ENCODE measurements at regions of chr12 and their contacts with region 1.

Region 1: DNA sequence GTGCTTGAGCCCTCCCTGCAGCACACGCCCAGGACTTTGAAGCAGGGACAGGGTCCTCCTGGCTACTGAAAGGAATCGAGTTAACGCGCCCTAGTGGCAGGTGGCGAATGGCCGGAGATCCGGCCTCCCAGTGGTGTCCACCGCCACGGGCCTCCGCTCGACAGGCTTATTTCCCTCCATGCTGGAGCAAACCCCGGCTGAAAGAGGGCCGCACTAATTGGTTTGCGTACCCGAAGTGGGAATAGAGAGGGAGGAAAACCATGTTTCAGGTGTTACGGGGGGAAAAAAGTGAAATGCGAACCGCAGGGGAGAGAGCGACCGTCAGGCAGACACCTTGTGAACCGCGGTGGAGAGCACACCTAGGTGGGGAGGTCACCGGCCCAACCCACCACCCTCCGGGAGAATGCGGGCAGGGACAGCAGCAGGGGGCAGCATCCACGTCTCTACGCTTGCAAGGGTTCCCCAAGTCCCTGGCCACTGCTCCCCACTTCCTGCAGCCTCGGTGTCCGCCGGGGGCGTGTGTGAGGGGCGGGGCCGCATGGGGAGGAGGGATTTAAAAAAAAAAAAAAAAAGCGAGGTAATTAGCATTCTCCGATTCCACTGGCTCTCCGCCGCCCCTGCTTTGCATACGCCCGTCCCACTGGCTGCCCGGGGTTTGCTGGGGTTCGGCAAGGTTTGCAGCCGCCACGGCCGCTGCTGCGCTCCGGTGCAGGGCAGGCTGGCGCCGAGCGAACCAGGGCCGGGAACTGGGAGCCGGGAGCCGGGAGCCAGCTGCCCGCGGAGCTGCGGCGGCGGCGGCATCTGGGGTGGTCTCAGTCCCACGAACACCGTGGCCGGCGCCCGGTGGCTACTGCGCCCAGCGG is 224.6 kb upstream of the CRY1 start:
- DNase-seq: peak; percentile 78
- ATAC-seq: peak; percentile 79
- H3K4me3 ChIP-seq: peak overlapping the region; percentile 65 to 66
- H3K27ac ChIP-seq: peak overlapping the region; percentile 45; the same call in 1 of the 2 replicates
- H3K4me1 ChIP-seq: peaks cover 10 to 36% of the 10 kb centered on the region in 2 experiments; a peak in 3 of 4 replicates
- H3K27me3 ChIP-seq: peaks cover 11% of the 10 kb centered on the region; the same call in 1 of the 2 replicates
- CTCF ChIP-seq: peak; percentile 37 to 64 (median 58); a peak in 4 of 6 replicates
- POLR2A ChIP-seq: no peak
- RAD21 ChIP-seq: peak; percentile 57

Region 2: DNA sequence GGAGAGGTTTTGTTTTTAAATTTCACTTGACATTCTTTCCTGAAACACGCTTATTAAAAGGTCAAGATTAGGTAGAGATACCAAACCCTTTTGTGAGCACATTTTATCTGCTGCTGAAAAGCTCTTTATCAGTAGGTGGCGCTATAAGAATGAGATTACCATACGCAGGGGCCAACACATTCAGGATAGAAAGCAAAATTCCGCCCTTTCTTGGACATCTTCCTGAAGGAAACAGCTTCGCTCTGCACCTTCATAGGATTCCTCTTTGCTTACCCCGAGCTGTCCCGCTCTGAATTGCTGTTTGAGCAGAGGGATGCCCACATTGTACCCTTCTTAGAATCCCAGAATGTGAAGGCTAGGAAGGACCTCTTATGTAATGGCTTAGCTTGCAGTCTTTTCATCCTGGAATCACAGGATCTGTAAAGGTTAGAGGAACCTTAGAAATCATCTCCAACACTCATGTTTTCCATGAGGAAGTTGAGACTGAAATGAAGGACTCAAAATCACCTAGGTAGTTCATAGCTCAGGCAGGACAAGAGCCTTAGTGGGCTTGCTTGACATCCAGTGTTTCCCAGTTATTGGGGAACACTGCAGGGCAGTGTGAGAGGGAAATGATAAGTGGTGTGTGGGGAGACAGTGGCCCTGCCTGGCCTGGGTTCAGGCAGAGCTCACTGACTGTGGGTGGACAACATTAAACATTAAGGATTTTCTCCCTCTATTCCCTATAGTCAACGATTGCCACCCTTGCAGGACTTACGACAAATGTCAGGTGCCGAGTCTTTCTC is 186.0 kb before region 1 on chr12:
- CTCF ChIA-PET with region 1: interaction called, 5 read pairs
- POLR2A ChIA-PET with region 1: no interaction called
- RAD21 ChIA-PET with region 1: no interaction called
- intact Hi-C with region 1: loop called (anchors 1 kb)
- DNase-seq: peak; percentile 44
- ATAC-seq: peak; percentile 78
- H3K4me3 ChIP-seq: no peak overlapping the region
- H3K27ac ChIP-seq: no peak overlapping the region
- H3K4me1 ChIP-seq: peaks cover 0 to 9% of the 10 kb centered on the region in 2 experiments; a peak in 2 of 4 replicates
- H3K27me3 ChIP-seq: no peaks in the 10 kb centered on the region
- CTCF ChIP-seq: peak; percentile 82 to 96 (median 92)
- POLR2A ChIP-seq: no peak
- RAD21 ChIP-seq: peak; percentile 97

Region 3: GRCh38 chr12:107402041-107403022 is 84.3 kb after region 1 on chr12:
- CTCF ChIA-PET with region 1: interaction called, 4 read pairs
- POLR2A ChIA-PET with region 1: no interaction called
- RAD21 ChIA-PET with region 1: no interaction called
- intact Hi-C with region 1: loop called (anchors 2 kb)
- DNase-seq: peak; percentile 69
- ATAC-seq: peak; percentile 76
- H3K4me3 ChIP-seq: no peak overlapping the region
- H3K27ac ChIP-seq: no peak overlapping the region
- H3K4me1 ChIP-seq: peaks cover under 1 to 15% of the 10 kb centered on the region in 2 experiments; a peak in 3 of 4 replicates
- H3K27me3 ChIP-seq: no peaks in the 10 kb centered on the region
- CTCF ChIP-seq: peak; percentile 82 to 89 (median 83)
- POLR2A ChIP-seq: no peak
- RAD21 ChIP-seq: peak; percentile 94

Region 4: DNA sequence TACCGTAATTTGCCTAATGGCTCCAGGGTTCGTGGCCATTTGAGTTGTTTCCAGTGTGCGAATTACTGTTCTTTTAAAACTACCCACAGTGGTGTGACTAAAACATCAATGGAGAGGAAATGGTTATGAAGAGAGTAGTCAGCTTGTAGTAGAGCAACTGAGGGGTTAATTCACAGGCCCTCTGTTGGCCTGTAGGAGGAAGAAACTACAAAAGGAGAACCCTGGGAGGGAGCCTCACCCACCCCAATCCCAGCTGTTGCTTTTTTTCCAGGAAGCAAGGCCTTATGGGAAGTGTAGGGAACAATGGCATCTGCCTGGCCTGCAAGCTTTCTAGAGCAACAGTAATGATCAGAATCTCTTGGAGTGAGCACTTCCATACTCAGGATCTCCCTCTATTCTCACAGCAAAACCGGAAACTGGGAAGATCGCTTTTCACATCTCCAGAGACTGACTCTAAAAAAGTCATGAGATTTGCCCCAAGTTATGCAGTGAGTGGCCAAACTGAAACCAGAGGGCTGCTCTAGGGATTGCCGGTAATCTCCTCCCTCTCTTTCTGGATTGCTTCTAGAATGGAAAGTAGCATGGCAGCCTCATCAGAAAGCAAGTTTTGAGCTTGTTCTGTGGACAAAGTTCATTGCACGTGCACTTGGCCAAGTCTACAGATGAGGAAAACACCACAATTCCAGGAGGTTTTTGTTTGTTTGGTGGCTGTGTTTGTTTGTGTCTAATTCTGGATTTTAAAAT is 242.4 kb after region 1 on chr12:
- CTCF ChIA-PET with region 1: no interaction called
- POLR2A ChIA-PET with region 1: no interaction called
- RAD21 ChIA-PET with region 1: no interaction called
- intact Hi-C with region 1: no loop called
- DNase-seq: peak; percentile 16
- ATAC-seq: peak; percentile 86
- H3K4me3 ChIP-seq: no peak overlapping the region
- H3K27ac ChIP-seq: no peak overlapping the region
- H3K4me1 ChIP-seq: peaks cover 0 to 7% of the 10 kb centered on the region in 2 experiments; a peak in 2 of 4 replicates
- H3K27me3 ChIP-seq: no peaks in the 10 kb centered on the region
- CTCF ChIP-seq: peak in 2 of 3 experiments; percentile 19 to 20; a peak in 2 of 6 replicates
- POLR2A ChIP-seq: no peak
- RAD21 ChIP-seq: no peak